A673 (cell line): ENCODE measurements at regions of chr14 and their contacts with region 1.

Region 1: GRCh38 chr14:97056086-97056485 is 258.9 kb downstream of the VRK1 start:
- DNase-seq: peak; percentile 51
- H3K4me3 ChIP-seq: no peak overlapping the region
- H3K27ac ChIP-seq: peak overlapping the region; percentile 71
- H3K4me1 ChIP-seq: peaks cover 36% of the 10 kb centered on the region
- H3K27me3 ChIP-seq: no peaks in the 10 kb centered on the region
- CTCF ChIP-seq: peak; percentile 29; the same call in 1 of the 2 replicates

Region 2: DNA sequence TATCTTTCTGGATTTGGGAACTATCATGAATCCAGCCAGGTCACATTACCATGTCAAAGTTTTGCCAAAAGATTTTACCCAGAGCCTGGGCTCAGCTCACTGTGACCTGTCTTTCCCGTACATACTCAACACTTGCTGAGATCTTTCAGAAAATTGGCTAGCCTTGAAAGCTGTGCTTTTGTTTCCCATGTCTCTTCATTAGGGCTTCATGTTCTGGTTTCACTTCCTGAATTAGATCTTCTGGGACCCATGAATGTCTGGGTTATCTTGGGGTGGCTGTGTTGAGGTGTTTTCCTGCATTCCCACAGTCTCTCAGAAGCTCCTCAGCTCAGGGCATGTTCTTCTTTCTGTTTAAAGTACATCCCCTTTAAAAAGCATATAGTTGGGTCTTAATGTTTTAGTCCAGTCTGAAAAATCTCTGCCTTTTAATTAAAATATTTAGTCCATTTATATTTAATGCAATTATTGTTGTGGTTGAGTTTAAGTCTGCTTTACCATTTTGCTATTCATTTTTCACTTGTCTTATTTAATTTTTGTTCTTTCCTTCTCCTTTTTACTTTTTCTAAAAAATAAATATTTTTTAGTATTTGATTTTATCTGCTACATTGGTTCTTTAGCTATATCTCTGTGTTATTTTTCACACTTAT is 16.2 kb before region 1 on chr14:
- CTCF ChIA-PET with region 1: no interaction called
- POLR2A ChIA-PET with region 1: interaction called, 3 read pairs
- intact Hi-C with region 1: loop called (anchors 1 kb)
- DNase-seq: no peak
- H3K4me3 ChIP-seq: no peak overlapping the region
- H3K27ac ChIP-seq: no peak overlapping the region
- H3K4me1 ChIP-seq: peaks cover 15% of the 10 kb centered on the region
- H3K27me3 ChIP-seq: no peaks in the 10 kb centered on the region
- CTCF ChIP-seq: no peak

Region 3: DNA sequence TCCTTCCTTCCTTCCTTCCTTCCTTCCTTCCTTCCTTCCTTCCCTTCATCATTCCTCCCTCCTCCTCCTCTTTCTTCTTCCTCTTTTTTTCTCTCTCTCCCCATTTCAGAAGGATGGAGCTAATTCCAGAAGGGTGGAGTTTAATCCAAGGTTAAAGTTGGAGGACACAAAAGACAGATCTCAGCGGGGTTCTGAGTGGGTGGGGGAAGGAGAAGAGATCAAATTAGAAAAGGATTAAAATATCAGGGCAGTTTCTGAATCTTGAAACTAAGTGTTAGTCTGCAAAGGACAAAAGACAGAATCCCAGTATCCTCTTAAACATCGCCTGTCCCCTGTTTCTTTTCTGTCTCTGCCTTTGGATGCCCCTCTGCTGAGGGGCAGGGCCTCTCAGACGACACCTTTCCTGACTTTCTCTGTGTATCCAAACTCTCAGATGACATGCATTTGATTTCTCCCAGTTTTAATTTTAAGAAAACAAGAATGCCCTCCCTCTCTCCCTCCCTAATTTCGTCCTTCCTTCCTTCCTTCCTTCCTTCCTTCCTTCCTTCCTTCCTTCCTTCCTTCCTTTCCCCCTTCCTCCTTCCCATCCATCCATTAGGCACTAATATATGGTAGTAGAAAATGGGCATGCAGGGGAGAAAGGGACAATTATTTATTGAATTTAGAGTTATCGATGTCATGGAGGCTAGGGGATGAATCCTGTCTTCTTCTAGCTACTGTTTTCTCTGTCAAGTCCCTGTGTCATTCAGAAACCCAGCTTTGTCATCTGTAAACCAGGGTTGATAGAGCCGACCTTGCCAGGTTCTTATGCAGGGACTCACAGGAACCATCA is 10.2 kb after region 1 on chr14:
- CTCF ChIA-PET with region 1: no interaction called
- POLR2A ChIA-PET with region 1: interaction called, 20 read pairs
- intact Hi-C with region 1: no loop called
- DNase-seq: peak; percentile 96
- H3K4me3 ChIP-seq: no peak overlapping the region
- H3K27ac ChIP-seq: peak overlapping the region; percentile 100
- H3K4me1 ChIP-seq: peaks cover 70% of the 10 kb centered on the region
- H3K27me3 ChIP-seq: no peaks in the 10 kb centered on the region
- CTCF ChIP-seq: no peak

Region 4: GRCh38 chr14:97077253-97077653 is 21.2 kb after region 1 on chr14:
- CTCF ChIA-PET with region 1: no interaction called
- POLR2A ChIA-PET with region 1: no interaction called
- intact Hi-C with region 1: no loop called
- DNase-seq: peak; percentile 84
- H3K4me3 ChIP-seq: no peak overlapping the region
- H3K27ac ChIP-seq: peak overlapping the region; percentile 57
- H3K4me1 ChIP-seq: peaks cover 36% of the 10 kb centered on the region
- H3K27me3 ChIP-seq: no peaks in the 10 kb centered on the region
- CTCF ChIP-seq: no peak

Region 5: DNA sequence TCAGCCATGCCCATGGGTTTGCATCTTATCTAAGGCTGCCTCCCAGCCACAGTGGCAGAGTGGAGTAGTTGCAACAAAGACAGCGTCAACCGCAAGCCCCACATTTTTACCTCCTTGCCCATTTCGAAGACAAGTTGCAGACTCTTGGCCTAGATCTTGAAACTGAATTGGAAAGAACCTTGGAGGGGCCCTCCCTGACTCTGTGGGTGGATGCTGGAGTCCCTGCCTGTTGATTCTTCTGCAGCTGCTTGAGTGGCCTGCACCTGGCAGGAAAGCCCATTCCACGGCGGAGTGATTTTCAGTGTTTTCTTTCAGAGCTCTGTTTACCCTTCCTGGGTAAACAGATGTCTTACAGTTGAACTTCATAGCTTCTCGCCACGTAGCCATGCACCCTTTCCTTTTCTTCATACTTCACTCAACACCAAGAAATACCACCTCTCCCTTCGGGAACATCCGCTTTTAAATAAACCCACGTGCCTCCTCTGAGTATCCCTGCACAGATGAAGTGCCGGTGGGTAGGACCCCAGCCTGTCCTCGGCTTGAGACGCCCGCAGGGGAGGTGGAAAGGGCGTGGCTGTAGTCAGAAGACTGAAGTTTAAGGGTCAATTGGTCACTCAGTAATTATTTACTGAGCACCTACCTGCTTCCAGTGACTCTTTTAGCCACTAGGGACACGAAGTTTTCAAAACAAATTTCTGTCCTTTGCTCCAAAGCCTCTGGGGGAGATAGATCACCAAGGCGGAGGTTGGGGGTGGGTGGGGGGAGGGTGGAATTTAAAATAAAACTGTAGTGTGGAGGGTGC is 50.3 kb after region 1 on chr14:
- CTCF ChIA-PET with region 1: no interaction called
- POLR2A ChIA-PET with region 1: no interaction called
- intact Hi-C with region 1: no loop called
- DNase-seq: no peak
- H3K4me3 ChIP-seq: no peak overlapping the region
- H3K27ac ChIP-seq: no peak overlapping the region
- H3K4me1 ChIP-seq: no peaks in the 10 kb centered on the region
- H3K27me3 ChIP-seq: no peaks in the 10 kb centered on the region
- CTCF ChIP-seq: no peak